Prostate gland (tissue), 2 donors: ENCODE measurements at regions of chr19 and their contacts with region 1.

Region 1: GRCh38 chr19:46189971-46190888 is 39.3 kb upstream of the IGFL1 start:
- DNase-seq: no peak
- H3K4me3 ChIP-seq: no peak overlapping the region
- H3K27ac ChIP-seq: no peak overlapping the region
- H3K4me1 ChIP-seq: peaks cover 2% of the 10 kb centered on the region
- H3K27me3 ChIP-seq: no peaks in the 10 kb centered on the region
- CTCF ChIP-seq: no peak
- POLR2A ChIP-seq: no peak

Region 2: DNA sequence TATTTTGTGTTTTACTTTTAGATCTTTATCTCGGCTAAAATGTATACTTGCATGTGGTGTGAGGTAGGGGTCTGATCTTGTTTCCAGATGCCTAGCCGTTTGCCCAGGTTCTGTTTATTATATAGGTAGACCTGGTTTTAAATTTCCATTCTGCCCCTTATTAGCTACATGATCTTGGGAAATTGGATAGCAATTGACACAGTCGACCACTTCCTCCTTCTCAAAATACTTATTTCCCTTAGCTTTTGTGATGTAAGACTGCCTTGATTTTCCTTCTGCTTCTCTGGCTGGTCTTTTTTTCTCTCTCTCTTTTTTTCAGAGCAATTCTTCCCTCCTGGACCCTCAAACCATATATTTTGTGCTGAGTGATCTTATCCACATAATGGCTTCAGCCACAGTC is 164.4 kb before region 1 on chr19:
- intact Hi-C with region 1: loop called (anchors 2 kb)
- DNase-seq: no peak
- H3K4me3 ChIP-seq: no peak overlapping the region
- H3K27ac ChIP-seq: no peak overlapping the region
- H3K4me1 ChIP-seq: no peaks in the 10 kb centered on the region
- H3K27me3 ChIP-seq: no peaks in the 10 kb centered on the region
- CTCF ChIP-seq: no peak
- POLR2A ChIP-seq: no peak

Region 3: DNA sequence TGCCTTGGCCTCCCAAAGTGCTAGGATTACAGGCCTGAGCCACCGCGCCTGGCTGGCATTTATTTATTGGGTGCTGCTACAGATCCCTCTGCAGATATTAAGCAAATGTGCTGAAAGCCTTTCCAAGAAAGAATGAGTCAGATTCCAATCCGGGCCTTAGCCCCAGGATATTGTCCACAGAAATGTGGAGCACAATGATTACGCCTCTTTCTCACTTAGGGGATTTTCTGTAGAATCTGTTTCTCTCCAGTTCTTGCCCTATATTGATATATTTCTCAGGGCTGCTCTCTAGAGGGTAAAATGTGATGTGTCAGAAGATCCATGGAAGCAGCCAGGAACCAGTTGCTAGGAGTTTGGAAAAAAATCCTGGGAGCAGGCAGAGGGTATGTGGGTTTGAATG is 124.7 kb before region 1 on chr19:
- intact Hi-C with region 1: no loop called
- DNase-seq: no peak
- H3K4me3 ChIP-seq: no peak overlapping the region
- H3K27ac ChIP-seq: no peak overlapping the region
- H3K4me1 ChIP-seq: no peaks in the 10 kb centered on the region
- H3K27me3 ChIP-seq: peaks cover 3% of the 10 kb centered on the region
- CTCF ChIP-seq: no peak
- POLR2A ChIP-seq: no peak

Region 4: GRCh38 chr19:46081928-46082727 is 108.1 kb before region 1 on chr19:
- intact Hi-C with region 1: loop called (anchors 2 kb)
- DNase-seq: peak; percentile 25
- H3K4me3 ChIP-seq: no peak overlapping the region
- H3K27ac ChIP-seq: no peak overlapping the region
- H3K4me1 ChIP-seq: no peaks in the 10 kb centered on the region
- H3K27me3 ChIP-seq: no peaks in the 10 kb centered on the region
- CTCF ChIP-seq: peak; percentile 33 to 81 (median 74)
- POLR2A ChIP-seq: no peak

Region 5: GRCh38 chr19:46133101-46133682 is 57.0 kb before region 1 on chr19:
- intact Hi-C with region 1: no loop called
- DNase-seq: peak; percentile 67
- H3K4me3 ChIP-seq: no peak overlapping the region
- H3K27ac ChIP-seq: peak overlapping the region; percentile 44 to 48
- H3K4me1 ChIP-seq: no peaks in the 10 kb centered on the region
- H3K27me3 ChIP-seq: no peaks in the 10 kb centered on the region
- CTCF ChIP-seq: no peak
- POLR2A ChIP-seq: no peak